ENCODE measurements at regions of chr1 and their contacts with region 1.

Region 1: DNA sequence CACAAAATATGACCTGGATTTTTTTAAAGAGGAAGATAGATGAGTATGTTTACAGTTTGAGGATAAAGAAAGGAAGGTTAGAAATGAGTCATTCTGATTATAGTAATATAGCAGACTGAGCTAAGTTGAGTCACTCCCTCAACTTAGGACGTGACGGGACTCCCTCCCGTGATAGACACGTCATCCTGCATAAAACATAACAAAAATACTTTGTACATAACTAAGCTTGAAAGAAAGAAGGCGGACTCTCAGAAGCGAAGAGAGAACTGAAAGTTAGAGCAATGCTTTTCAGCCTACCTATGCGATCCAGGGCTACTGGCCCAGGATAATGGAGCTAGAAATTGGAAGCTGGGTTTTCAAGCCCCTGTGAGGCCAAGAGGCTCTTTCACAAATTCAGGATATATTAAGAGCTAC is 53.0 kb upstream of the DESI2 start:
- DNase-seq: peak; percentile 33 to 62
- H3K4me3 ChIP-seq: peak overlapping the region in 1 of 2 donors; percentile 3
- H3K27ac ChIP-seq: peak overlapping the region; percentile 45 to 70
- H3K4me1 ChIP-seq: no peaks in the 10 kb centered on the region
- H3K27me3 ChIP-seq: no peaks in the 10 kb centered on the region
- CTCF ChIP-seq: no peak
- POLR2A ChIP-seq: peak in 1 of 2 donors; percentile 25

Region 2: GRCh38 chr1:244792188-244792850 is 192.4 kb after region 1 on chr1:
- intact Hi-C with region 1: loop called (anchors 5 kb)
- DNase-seq: no peak
- H3K4me3 ChIP-seq: no peak overlapping the region
- H3K27ac ChIP-seq: no peak overlapping the region
- H3K4me1 ChIP-seq: no peaks in the 10 kb centered on the region
- H3K27me3 ChIP-seq: no peaks in the 10 kb centered on the region
- CTCF ChIP-seq: no peak
- POLR2A ChIP-seq: no peak

Region 3: DNA sequence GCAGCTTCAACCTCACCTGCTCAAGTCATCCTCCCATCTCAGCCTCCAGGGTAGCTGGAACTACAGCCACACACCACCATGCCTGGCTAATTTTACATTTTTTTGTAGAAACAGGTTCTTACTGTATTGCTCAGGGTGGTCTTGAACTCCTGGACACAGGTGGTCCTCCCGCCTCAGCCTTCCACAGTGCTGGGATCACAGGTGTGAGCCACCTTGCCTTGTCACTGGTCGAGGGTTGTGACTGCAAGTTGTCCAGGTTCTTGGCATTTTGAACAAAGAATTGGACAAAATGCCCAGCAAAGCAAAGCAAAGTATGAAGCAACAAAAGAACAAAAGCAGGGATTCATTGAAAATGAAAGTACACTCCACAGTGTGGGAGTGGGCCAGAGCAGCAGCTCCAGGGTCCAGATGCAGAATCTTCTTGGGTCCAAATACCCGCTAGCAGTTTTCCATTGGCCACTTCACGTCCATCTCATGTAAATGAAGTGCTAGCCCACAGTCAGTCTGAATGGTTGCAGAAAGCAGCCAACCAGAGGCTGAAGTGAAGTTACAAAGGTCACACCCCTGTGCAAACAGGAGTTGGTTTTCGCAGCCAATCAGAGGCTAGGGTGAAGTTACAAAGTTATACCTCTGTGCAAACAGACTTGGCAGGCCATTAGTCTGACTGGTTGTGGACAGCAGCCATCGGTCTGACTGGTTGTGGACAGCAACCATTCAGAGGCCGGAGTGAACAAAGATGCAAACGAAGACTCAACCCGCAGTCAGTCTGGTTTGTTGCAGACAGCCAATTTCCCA is 445.3 kb after region 1 on chr1:
- intact Hi-C with region 1: loop called (anchors 10 kb)
- DNase-seq: no peak
- H3K4me3 ChIP-seq: no peak overlapping the region
- H3K27ac ChIP-seq: no peak overlapping the region
- H3K4me1 ChIP-seq: no peaks in the 10 kb centered on the region
- H3K27me3 ChIP-seq: no peaks in the 10 kb centered on the region
- CTCF ChIP-seq: no peak
- POLR2A ChIP-seq: no peak